ENCODE measurements at regions of chr6 and their contacts with region 1.

Region 1: DNA sequence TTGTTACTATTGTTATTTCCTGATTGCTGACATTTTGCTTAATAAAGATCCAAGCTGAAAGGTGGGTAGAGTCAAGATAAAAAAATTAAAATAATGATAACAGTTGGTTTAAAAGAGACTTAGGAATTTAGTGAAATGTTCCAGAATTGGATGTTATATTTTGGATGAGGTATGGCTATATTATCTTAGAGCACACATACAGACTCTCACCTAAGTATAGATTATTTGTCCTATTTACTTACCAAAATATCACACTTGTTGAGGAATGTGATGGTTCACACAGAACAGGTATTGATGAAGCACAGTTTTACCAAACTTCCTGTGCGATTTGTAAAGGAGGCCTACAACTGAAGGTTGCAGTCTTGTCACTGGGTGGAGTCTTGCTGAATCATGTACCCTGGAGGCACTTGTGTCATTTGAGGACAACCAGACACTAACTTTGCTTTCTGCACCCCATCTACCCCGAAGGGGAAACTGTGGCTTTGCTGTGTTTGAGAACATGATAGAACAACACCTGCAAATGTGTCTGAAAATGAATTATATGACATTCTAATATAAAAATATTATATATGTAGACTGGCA is 32.5 kb upstream of the HINT3 start:
- DNase-seq: no peak
- CTCF ChIP-seq: no peak

Region 2: DNA sequence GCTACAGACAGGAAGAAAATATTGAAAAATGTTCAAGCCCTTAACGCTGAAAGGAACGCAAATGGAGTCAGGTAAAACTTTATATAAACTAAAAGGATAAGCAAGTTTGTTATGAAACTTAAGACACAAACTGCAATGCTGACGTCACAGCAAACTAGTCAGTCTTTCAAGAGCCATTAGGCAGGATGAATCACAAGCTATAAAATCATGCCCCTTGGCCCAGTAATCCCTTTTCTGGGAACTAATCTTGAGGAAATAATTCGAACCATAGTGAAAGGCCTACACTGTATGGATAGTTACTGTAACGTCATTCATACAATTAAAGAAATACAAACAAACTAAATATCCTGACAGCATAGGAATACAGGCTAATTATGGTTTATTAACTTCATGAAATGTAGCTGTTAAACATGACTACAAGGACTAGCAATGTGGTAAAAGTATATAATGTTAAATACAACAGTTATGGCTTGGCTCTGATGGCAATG is 10.2 kb before region 1 on chr6:
- CTCF ChIA-PET with region 1: interaction called, 10 read pairs
- POLR2A ChIA-PET with region 1: no interaction called
- DNase-seq: no peak
- CTCF ChIP-seq: no peak

Measured in GM10248 (cell line).